B cell (primary cell): ENCODE measurements at regions of chr22 and their contacts with region 1.

Region 1: DNA sequence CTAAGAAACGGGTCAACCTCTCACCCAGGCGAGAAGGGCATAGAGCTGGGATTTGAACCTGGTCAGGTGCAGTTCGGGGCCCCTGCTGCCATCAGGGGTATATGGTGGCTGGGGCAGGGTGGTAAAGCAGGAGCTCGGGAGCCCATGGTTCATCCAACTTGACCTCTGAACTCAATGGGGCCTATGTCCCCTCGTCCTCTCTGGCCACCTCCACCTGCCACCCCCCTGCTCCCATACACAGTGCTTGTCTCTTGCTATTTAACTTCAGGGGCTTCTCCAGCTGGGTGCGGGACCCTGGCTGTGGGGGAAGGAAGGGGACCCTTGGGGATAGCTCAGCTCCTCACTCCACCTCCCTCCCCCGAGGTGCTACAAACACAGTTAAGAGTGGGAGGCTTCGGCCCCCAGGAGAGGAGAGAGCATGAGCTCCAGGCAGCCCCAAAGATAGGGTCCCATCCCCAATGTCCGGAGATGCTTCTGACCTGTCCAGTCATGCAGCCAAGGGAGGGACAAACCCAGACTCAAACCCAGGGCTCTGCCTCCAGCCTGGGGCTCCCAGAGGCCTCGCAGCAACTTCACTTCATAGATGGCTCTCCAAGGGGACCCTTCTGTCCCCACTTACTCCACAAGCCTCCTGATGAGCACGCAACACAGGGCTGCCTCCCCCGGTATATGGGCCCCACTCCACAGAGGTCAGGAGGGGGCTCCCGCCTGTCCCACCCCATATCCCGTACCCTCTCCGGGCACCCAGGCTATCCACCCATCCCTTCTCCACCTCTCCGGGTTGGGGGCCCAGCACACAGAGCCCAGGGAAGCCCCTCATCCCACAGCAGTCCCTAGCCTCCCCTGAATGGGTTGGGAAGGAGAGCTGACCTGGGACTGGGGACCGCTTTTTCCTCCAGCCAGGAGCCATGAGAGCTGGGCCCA is 712 bp downstream of the IL2RB start:
- DNase-seq: no peak
- ATAC-seq: no peak
- H3K4me3 ChIP-seq: peak overlapping the region in 2 of 5 experiments; percentile 3 to 5
- H3K4me3 Mint-ChIP-seq: no peak overlapping the region
- H3K27ac ChIP-seq: no peak overlapping the region
- H3K27ac Mint-ChIP-seq: no peak overlapping the region
- H3K4me1 ChIP-seq: peaks cover 0 to 20% of the 10 kb centered on the region in 2 donors
- H3K4me1 Mint-ChIP-seq: peaks cover 22% of the 10 kb centered on the region
- H3K27me3 ChIP-seq: no peaks in the 10 kb centered on the region
- H3K27me3 Mint-ChIP-seq: no peaks in the 10 kb centered on the region
- CTCF ChIP-seq: no peak

Region 2: DNA sequence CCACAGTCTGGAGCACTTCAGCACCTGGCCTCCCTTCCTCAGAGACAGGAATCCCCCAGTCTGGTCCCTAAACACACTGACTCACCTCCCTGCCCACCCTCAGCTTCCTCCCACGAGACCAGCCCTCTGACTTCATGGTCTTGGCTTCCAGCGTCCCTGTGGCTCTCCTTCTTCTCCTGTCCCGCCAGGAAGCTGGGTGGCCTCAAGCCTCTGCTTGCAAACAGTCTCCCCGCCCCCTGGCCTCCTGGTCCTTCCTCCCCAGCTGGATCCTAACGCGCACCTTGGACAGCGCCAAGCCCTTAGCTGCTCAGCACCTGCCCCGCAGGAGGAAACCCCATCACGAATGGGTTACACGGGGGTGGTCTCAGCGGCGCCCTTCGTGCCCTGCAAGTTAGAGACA is 283.7 kb before region 1 on chr22:
- CTCF ChIA-PET with region 1: no interaction called
- POLR2A ChIA-PET with region 1: no interaction called
- intact Hi-C with region 1: no loop called
- DNase-seq: no peak
- ATAC-seq: no peak
- H3K4me3 ChIP-seq: no peak overlapping the region
- H3K4me3 Mint-ChIP-seq: no peak overlapping the region
- H3K27ac ChIP-seq: no peak overlapping the region
- H3K27ac Mint-ChIP-seq: peak overlapping the region; percentile 41
- H3K4me1 ChIP-seq: peaks cover 30 to 41% of the 10 kb centered on the region in 2 donors
- H3K4me1 Mint-ChIP-seq: peaks cover 48% of the 10 kb centered on the region
- H3K27me3 ChIP-seq: no peaks in the 10 kb centered on the region
- H3K27me3 Mint-ChIP-seq: no peaks in the 10 kb centered on the region
- CTCF ChIP-seq: no peak

Region 3: GRCh38 chr22:38012604-38013072 is 863.6 kb after region 1 on chr22:
- CTCF ChIA-PET with region 1: no interaction called
- POLR2A ChIA-PET with region 1: interaction called, 13 read pairs
- intact Hi-C with region 1: no loop called
- DNase-seq: no peak
- ATAC-seq: no peak
- H3K4me3 ChIP-seq: no peak overlapping the region
- H3K4me3 Mint-ChIP-seq: no peak overlapping the region
- H3K27ac ChIP-seq: no peak overlapping the region
- H3K27ac Mint-ChIP-seq: no peak overlapping the region
- H3K4me1 ChIP-seq: no peaks in the 10 kb centered on the region
- H3K4me1 Mint-ChIP-seq: no peaks in the 10 kb centered on the region
- H3K27me3 ChIP-seq: peaks cover 0 to 3% (median 1%) of the 10 kb centered on the region in 4 experiments
- H3K27me3 Mint-ChIP-seq: peaks cover 3% of the 10 kb centered on the region
- CTCF ChIP-seq: no peak